PC-9 (cell line): ENCODE measurements at regions of chr7 and their contacts with region 1.

Region 1: DNA sequence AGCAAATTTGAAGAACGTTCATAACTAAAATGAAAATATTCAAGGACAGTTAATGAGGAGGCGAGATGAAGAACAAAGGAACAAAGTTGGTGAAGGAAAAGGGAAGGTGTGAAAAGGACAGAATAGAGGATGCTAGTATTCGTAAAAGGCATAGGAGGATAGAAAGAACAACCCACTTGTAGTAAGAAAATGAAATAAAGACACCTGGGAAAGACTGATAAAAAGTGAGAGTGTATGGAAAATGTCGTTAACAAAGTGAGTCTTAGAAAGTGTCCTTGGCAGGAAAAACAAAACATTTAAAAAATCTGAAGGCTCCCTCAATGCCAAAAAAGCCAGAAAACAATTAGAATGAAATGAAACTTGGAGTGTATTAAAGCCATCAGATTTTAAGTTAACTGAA is 29.6 kb upstream of the ZC3HAV1 start:
- DNase-seq: no peak
- H3K4me3 ChIP-seq: no peak overlapping the region
- H3K27ac ChIP-seq: no peak overlapping the region
- H3K4me1 ChIP-seq: peaks cover 6% of the 10 kb centered on the region; the same call in 1 of the 2 replicates
- H3K27me3 ChIP-seq: no peaks in the 10 kb centered on the region
- CTCF ChIP-seq: no peak

Region 2: GRCh38 chr7:139004321-139005075 is 134.7 kb before region 1 on chr7:
- CTCF ChIA-PET with region 1: interaction called, 10 read pairs
- POLR2A ChIA-PET with region 1: no interaction called
- intact Hi-C with region 1: no loop called
- DNase-seq: no peak
- H3K4me3 ChIP-seq: no peak overlapping the region
- H3K27ac ChIP-seq: no peak overlapping the region
- H3K4me1 ChIP-seq: no peaks in the 10 kb centered on the region
- H3K27me3 ChIP-seq: no peaks in the 10 kb centered on the region
- CTCF ChIP-seq: no peak